H1 (cell line): ENCODE measurements at regions of chr10 and their contacts with region 1.

Region 1: DNA sequence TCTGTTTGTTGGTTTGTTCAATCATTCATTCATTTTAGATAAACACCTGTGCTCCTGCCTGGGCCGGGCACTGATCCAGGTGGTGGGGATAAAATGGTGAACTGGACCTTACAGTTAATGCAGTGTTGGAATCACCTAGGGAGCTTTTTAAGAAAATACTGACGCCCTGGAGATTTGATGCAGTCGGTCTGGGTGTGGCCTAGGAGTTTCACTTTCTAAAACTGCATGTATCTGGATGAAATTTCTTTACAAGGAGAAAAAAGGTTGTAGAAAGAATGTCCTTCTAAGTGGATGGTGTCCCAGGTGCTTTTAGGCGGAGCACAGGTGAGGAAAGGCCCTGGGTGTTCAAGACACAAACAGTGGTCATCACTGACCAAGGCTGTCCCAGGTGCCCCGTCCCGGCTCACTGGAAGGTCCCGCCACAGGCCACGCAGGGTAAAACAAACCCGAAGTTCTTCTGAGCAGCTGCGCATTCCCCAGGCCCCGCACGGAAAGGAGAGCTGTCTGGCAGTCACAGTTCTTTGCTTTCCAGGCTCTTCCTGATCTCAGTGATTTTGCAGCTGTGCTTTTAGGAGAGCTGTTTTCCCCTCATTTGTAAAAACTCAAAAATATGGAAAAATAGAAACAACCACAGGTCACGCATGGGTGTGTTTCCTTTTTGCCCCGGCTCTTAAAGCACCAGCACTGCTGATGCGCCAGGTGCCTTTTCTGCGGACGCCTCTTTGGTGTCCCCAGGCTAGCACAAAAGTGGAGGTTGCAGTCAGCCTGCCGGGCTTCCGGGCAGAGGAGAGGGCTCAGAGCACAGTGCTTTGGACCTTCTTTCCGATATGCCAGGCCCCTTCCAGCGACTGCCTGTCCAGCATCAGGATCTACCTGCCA is 161.9 kb downstream of the GRK5 start:
- DNase-seq: no peak
- H3K4me3 ChIP-seq: no peak overlapping the region
- H3K27ac ChIP-seq: no peak overlapping the region
- H3K4me1 ChIP-seq: no peaks in the 10 kb centered on the region
- H3K27me3 ChIP-seq: no peaks in the 10 kb centered on the region
- CTCF ChIP-seq: no peak
- EP300 ChIP-seq: no peak
- POLR2A ChIP-seq: no peak
- RAD21 ChIP-seq: no peak

Region 2: GRCh38 chr10:119348516-119349240 is 20.6 kb before region 1 on chr10:
- CTCF ChIA-PET with region 1: interaction called, 48 read pairs
- POLR2A ChIA-PET with region 1: no interaction called
- DNase-seq: no peak
- H3K4me3 ChIP-seq: no peak overlapping the region
- H3K27ac ChIP-seq: no peak overlapping the region
- H3K4me1 ChIP-seq: no peaks in the 10 kb centered on the region
- H3K27me3 ChIP-seq: no peaks in the 10 kb centered on the region
- CTCF ChIP-seq: no peak
- EP300 ChIP-seq: no peak
- POLR2A ChIP-seq: no peak
- RAD21 ChIP-seq: no peak

Region 3: DNA sequence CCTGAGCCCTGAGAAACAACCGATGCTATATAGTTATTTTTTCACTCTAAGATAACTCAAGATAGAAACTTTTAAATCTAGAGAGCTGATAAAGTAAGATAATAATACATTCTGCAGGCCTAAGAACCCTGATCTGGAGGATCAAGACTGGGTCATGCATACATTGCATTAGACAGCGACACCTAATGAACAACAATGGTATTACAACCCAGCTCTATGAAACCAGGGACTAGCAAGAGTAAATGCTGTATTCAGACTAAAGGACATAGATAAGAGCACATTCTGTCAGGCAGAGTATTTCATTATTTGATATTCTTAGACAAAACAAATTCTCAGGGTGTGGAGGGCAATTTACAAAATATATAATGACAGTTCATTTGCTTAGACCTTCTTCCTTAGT is 13.3 kb before region 1 on chr10:
- CTCF ChIA-PET with region 1: interaction called, 48 read pairs
- POLR2A ChIA-PET with region 1: no interaction called
- DNase-seq: no peak
- H3K4me3 ChIP-seq: no peak overlapping the region
- H3K27ac ChIP-seq: no peak overlapping the region
- H3K4me1 ChIP-seq: no peaks in the 10 kb centered on the region
- H3K27me3 ChIP-seq: no peaks in the 10 kb centered on the region
- CTCF ChIP-seq: peak in 2 of 3 experiments; percentile 10 to 41; a peak in 2 of 4 replicates
- EP300 ChIP-seq: no peak
- POLR2A ChIP-seq: no peak
- RAD21 ChIP-seq: peak; percentile 13 to 37; a peak in 2 of 4 replicates